ENCODE measurements at regions of chr2 and their contacts with region 1.

Region 1: GRCh38 chr2:232438951-232439757 is 16.8 kb upstream of the ALPI start:
- DNase-seq: peak in 1 of 2 experiments; percentile 71
- H3K4me3 ChIP-seq: no peak overlapping the region
- H3K27ac ChIP-seq: no peak overlapping the region
- H3K4me1 ChIP-seq: peaks cover 0 to 6% (median 4%) of the 10 kb centered on the region in 4 experiments; a peak in 6 of 7 replicates
- H3K27me3 ChIP-seq: peaks cover 0 to 2% (median 0%) of the 10 kb centered on the region in 4 experiments; a peak in 3 of 7 replicates
- CTCF ChIP-seq: peak in 2 of 3 experiments; percentile 22 to 28; a peak in 2 of 4 replicates
- EP300 ChIP-seq: no peak
- POLR2A ChIP-seq: no peak
- RAD21 ChIP-seq: peak; percentile 36 to 45

Region 2: DNA sequence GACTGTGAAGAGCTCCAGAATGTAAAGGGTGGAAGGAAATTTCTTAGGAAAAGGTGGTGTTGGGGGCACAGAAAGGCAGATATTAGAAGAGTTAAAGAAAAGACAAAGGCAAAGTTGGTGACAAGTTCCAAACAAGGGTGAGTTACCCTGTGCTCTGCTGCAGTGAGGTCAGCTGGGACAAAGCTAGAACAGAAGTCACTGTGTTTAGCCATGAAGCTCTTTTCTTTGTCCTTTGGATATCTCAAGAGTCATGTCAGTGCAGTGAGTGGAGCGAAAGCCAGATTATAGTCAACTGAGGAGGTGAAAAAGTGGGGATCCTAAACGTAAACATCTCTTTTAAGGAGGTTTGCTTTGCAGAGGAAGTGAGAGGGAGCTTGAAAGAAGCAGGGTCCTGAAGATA is 248.4 kb before region 1 on chr2:
- CTCF ChIA-PET with region 1: no interaction called
- POLR2A ChIA-PET with region 1: no interaction called
- DNase-seq: no peak
- H3K4me3 ChIP-seq: no peak overlapping the region
- H3K27ac ChIP-seq: no peak overlapping the region
- H3K4me1 ChIP-seq: peaks cover 0 to 4% (median 1%) of the 10 kb centered on the region in 4 experiments; a peak in 4 of 7 replicates
- H3K27me3 ChIP-seq: peaks cover 0 to 1% (median 0%) of the 10 kb centered on the region in 4 experiments; a peak in 1 of 7 replicates
- CTCF ChIP-seq: no peak
- EP300 ChIP-seq: no peak
- POLR2A ChIP-seq: no peak
- RAD21 ChIP-seq: no peak

Region 3: DNA sequence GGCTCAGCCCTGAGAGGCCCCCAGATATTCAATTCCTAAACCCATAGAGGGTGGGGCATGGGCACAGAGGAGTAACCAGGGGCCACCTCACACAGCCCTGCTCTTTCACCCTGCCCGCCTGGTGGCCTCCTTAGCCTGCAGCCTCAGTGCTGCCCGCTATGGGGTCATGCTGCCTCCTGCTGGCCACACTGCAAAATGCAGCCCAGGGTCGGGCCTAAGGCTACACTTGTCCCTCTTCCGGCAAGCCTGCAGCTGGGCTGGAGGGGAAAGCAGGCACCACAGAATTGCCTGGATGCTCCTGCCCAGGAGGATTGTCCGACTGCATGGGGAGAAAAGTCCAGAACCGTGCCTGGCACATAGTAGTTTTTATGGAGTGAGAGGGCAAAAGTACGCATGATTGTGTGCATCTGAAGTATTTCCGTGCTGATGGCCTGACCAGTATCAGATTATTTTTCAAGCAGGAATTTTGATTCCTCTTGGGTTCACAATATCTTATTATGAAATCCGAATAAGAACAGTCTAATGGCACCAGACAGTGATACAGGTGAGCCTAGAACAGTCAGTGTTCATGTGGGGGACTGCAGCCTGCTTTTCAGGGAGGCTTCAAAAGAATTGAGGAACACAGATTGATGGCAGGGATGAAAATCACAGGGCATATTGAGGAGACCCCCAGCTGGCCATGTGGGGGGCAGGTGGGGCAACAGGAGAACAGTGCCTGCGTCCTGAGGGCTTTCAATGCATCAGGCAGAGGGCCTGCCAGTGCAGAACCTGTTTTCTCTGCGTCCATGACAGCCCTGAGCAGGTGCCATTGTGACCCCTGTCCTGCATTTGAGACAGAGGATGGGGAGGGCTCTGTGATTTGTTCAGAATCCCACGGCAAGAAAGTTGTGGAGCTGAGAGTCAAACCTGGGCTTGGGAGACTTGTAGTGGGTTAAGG is 111.8 kb before region 1 on chr2:
- CTCF ChIA-PET with region 1: interaction called, 35 read pairs
- POLR2A ChIA-PET with region 1: no interaction called
- DNase-seq: peak; percentile 77 to 99
- H3K4me3 ChIP-seq: no peak overlapping the region
- H3K27ac ChIP-seq: no peak overlapping the region
- H3K4me1 ChIP-seq: peaks cover 0 to 18% (median 10%) of the 10 kb centered on the region in 4 experiments; a peak in 6 of 7 replicates
- H3K27me3 ChIP-seq: no peaks in the 10 kb centered on the region
- CTCF ChIP-seq: peak in 2 of 3 experiments; percentile 88 to 90; a peak in 3 of 4 replicates
- EP300 ChIP-seq: no peak
- POLR2A ChIP-seq: no peak
- RAD21 ChIP-seq: peak; percentile 78 to 82

Region 4: DNA sequence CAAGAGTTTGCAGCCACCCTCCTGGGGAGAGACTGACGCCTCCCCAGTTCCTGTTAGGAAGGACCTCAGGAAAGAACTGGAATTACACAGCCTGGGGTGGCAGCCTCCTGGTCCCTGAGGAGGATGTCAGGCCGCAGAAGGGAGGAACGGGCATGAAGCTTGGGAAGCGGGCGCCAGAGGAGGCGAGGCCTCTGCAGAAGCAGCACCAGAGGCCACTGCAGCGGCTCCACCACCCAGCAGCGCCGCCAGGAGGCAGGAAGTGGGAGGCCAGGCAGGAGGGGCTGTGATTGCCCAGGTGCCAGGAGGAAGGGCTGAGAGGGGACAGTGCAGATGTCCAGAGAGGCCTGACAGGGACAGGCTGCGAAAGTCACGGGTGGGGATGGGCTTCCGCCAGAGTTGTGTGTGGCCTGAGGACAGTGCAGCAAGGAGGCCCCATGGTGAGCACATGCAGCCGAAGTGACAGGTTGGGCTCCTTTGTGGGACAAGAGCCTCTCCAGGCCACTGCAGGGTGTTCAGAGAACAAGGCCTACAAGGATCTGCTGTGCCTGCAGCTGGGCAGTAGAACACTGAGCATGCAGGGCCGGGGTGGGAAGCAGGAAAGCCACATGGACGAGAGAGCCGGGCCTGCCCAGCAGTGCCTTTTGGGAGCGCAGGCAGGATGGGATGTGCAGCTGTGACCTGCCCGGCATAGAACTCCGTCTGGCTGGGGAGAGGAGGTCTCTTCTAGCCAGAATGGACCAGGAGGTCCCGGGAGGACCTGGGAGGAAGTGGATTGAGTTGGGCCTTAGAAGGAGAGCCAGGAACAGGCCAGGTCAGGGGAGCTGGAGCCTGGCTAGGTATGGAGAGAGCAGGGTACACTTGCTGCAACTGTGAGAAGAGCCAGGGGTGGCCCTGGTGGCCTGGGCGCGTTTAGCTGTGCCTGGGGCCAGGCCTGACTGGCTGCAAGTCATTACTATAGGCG is 99.8 kb before region 1 on chr2:
- CTCF ChIA-PET with region 1: interaction called, 67 read pairs
- POLR2A ChIA-PET with region 1: no interaction called
- DNase-seq: peak in 1 of 2 experiments; percentile 89
- H3K4me3 ChIP-seq: no peak overlapping the region
- H3K27ac ChIP-seq: no peak overlapping the region
- H3K4me1 ChIP-seq: no peaks in the 10 kb centered on the region; a peak in 1 of 7 replicates
- H3K27me3 ChIP-seq: no peaks in the 10 kb centered on the region
- CTCF ChIP-seq: peak in 2 of 3 experiments; percentile 82 to 87; a peak in 3 of 4 replicates
- EP300 ChIP-seq: no peak
- POLR2A ChIP-seq: no peak
- RAD21 ChIP-seq: peak; percentile 54 to 62

Region 5: GRCh38 chr2:232385660-232386489 is 53.3 kb before region 1 on chr2:
- CTCF ChIA-PET with region 1: interaction called, 23 read pairs
- POLR2A ChIA-PET with region 1: interaction called, 3 read pairs
- DNase-seq: no peak
- H3K4me3 ChIP-seq: peak overlapping the region; percentile 55 to 65 (median 63)
- H3K27ac ChIP-seq: no peak overlapping the region
- H3K4me1 ChIP-seq: peaks cover 5 to 32% (median 15%) of the 10 kb centered on the region in 4 experiments
- H3K27me3 ChIP-seq: peaks cover 22 to 66% (median 66%) of the 10 kb centered on the region in 4 experiments
- CTCF ChIP-seq: no peak
- EP300 ChIP-seq: no peak
- POLR2A ChIP-seq: no peak
- RAD21 ChIP-seq: 0 out of 4 replicates have a peak, but pooled peaks of 1 of the 2 experiments have one; percentile 2

Region 6: GRCh38 chr2:232420463-232421188 is 18.5 kb before region 1 on chr2:
- CTCF ChIA-PET with region 1: interaction called, 14 read pairs
- POLR2A ChIA-PET with region 1: interaction called, 12 read pairs
- DNase-seq: peak in 1 of 2 experiments; percentile 76
- H3K4me3 ChIP-seq: peak overlapping the region; percentile 69 to 95 (median 76)
- H3K27ac ChIP-seq: peak overlapping the region; percentile 27
- H3K4me1 ChIP-seq: peaks cover 8 to 43% (median 31%) of the 10 kb centered on the region in 4 experiments
- H3K27me3 ChIP-seq: peaks cover 12 to 40% (median 36%) of the 10 kb centered on the region in 4 experiments
- CTCF ChIP-seq: no peak
- EP300 ChIP-seq: no peak
- POLR2A ChIP-seq: no peak
- RAD21 ChIP-seq: no peak

Region 7: DNA sequence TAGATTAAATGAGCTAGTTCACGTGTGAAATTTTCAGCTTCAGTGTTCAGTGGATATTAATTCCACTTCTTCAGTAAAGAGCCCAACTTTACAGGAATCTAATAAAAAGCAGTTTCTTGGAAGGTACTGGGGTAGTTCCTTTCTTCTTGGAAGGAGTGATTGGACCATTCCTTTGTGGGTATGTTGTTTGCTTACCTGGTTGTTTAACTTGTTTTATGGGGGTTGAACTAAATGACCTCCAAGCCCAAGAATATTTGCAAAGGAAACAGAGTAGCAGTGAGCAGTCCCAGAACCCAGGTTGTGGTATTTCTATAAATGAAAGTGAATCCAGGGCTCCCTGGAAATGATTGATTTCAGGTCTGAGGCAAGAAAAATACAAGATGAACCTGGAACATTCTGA is 305.8 kb after region 1 on chr2:
- CTCF ChIA-PET with region 1: no interaction called
- POLR2A ChIA-PET with region 1: no interaction called
- DNase-seq: no peak
- H3K4me3 ChIP-seq: no peak overlapping the region
- H3K27ac ChIP-seq: no peak overlapping the region
- H3K4me1 ChIP-seq: no peaks in the 10 kb centered on the region
- H3K27me3 ChIP-seq: no peaks in the 10 kb centered on the region
- CTCF ChIP-seq: no peak
- EP300 ChIP-seq: no peak
- POLR2A ChIP-seq: no peak
- RAD21 ChIP-seq: no peak

Measured in H1 (cell line).